GM12878 (cell line): ENCODE measurements at regions of chr20 and their contacts with region 1.

Region 1: DNA sequence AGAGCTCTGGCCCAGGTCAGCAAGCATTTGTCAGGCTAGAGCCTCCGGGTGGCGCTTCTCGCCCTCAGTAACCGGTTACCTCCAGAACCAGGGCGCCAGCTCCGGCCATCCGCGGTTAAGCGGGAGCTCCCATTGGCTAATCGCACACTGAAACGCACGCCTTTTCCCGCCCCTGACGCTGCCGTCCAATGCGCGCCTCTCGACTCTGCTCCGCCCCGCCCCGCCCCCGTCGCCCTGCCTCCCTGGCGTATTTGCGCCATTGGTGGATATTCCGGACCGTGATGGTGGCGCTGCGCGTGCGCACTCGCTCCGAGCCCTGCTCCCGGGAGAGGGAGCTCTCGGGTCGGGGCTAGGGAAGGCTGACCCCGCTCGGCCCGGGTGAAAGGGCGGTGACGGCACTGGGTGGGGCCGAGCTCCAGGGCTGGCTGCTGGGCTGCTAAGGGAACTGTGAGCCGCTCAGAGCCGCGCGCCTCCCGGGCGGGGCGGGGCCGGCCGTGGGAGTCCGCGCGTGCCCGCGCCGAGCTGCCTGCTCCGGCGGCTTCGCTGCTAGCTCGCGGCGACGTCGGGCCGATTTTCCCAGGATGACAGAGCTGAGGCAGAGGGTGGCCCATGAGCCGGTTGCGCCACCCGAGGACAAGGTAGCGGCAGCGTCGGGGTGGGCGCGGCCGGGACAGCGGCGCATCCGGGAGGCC is at the start of gene CDS2:
- DNase-seq: peak; percentile 98
- ATAC-seq: peak; percentile 93
- H3K4me3 ChIP-seq: peak within 1 kb of the TSS; percentile 88
- H3K27ac ChIP-seq: peak within 1 kb of the TSS; percentile 87
- H3K4me1 ChIP-seq: peaks cover 16% of the 10 kb centered on the region
- H3K27me3 ChIP-seq: no peaks in the 10 kb centered on the region
- CTCF ChIP-seq: peak; percentile 61 to 80 (median 62); a peak in 5 of 6 replicates
- EP300 ChIP-seq: no peak
- POLR2A ChIP-seq: peak; percentile 69
- RAD21 ChIP-seq: peak; percentile 80
- polyA plus RNA-seq, gene CDS2: 11.5 to 15.4 TPM

Region 2: GRCh38 chr20:5056801-5057599 is 69.7 kb before region 1 on chr20:
- CTCF ChIA-PET with region 1: no interaction called
- POLR2A ChIA-PET with region 1: no interaction called
- RAD21 ChIA-PET with region 1: interaction called, 12 read pairs
- SMC1A ChIA-PET with region 1: interaction called, 3 read pairs
- in situ Hi-C with region 1: no loop called
- intact Hi-C with region 1: no loop called
- DNase-seq: peak; percentile 38
- ATAC-seq: peak; percentile 97
- H3K4me3 ChIP-seq: no peak overlapping the region
- H3K27ac ChIP-seq: no peak overlapping the region
- H3K4me1 ChIP-seq: peaks cover 4% of the 10 kb centered on the region; the same call in 1 of the 2 replicates
- H3K27me3 ChIP-seq: peaks cover 0 to 8% of the 10 kb centered on the region in 2 experiments; a peak in 1 of 4 replicates
- CTCF ChIP-seq: peak; percentile 43 to 56 (median 53)
- EP300 ChIP-seq: no peak
- POLR2A ChIP-seq: no peak
- RAD21 ChIP-seq: peak; percentile 48

Region 3: GRCh38 chr20:5146871-5147592 is 20.4 kb after region 1 on chr20:
- CTCF ChIA-PET with region 1: interaction called, 6 read pairs
- POLR2A ChIA-PET with region 1: interaction called, 3 read pairs
- RAD21 ChIA-PET with region 1: interaction called, 22 read pairs
- SMC1A ChIA-PET with region 1: interaction called, 10 read pairs
- in situ Hi-C with region 1: no loop called
- intact Hi-C with region 1: no loop called
- DNase-seq: no peak
- ATAC-seq: peak; percentile 41
- H3K4me3 ChIP-seq: no peak overlapping the region
- H3K27ac ChIP-seq: peak overlapping the region; percentile 35; the same call in 1 of the 2 replicates
- H3K4me1 ChIP-seq: peaks cover 27% of the 10 kb centered on the region
- H3K27me3 ChIP-seq: no peaks in the 10 kb centered on the region
- CTCF ChIP-seq: no peak
- EP300 ChIP-seq: no peak
- POLR2A ChIP-seq: no peak
- RAD21 ChIP-seq: no peak

Region 4: GRCh38 chr20:5168651-5169396 is 42.2 kb after region 1 on chr20:
- CTCF ChIA-PET with region 1: interaction called, 56 read pairs
- POLR2A ChIA-PET with region 1: interaction called, 10 read pairs
- RAD21 ChIA-PET with region 1: interaction called, 54 read pairs
- SMC1A ChIA-PET with region 1: interaction called, 64 read pairs
- in situ Hi-C with region 1: no loop called
- intact Hi-C with region 1: loop called (anchors 2 kb)
- DNase-seq: no peak
- ATAC-seq: peak; percentile 7
- H3K4me3 ChIP-seq: no peak overlapping the region
- H3K27ac ChIP-seq: peak overlapping the region; percentile 27
- H3K4me1 ChIP-seq: peaks cover 56% of the 10 kb centered on the region
- H3K27me3 ChIP-seq: no peaks in the 10 kb centered on the region
- CTCF ChIP-seq: no peak
- EP300 ChIP-seq: no peak
- POLR2A ChIP-seq: no peak
- RAD21 ChIP-seq: no peak

Region 5: DNA sequence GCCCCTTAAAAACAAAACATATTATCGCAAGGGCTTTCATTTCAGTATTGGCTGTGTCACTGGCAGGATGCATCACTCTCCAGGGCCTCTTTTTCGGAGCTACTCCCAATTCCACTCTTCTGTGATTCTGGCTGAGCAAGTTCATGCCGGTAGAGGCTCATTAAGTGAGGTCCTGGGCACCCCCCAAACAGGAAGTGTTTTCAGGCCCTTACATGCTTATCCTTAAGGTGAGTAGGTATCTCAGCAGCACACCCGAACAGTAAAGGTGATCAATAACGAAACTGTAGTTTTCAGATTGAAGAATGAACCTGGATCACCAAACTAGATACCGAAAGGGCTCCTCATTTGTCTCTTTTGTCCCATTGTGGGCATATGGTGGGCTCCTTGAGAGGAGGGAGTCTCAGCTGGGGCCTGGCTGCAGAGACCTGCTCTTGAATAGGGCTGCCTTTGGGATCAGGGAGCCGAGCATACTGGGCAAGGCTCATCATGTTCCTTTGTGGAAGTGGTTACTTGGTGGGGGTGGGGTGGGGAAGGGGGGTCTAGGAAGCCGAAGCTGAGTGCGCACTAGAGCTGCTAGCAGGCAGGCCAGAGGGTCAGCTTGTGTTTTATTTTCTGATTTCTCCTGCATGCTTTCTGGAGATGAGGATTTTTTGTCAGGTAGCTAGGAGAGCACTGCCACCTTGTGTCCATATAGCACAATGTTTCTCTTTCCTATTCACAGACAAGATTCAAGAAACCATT is 65.3 kb after region 1 on chr20:
- CTCF ChIA-PET with region 1: interaction called, 386 read pairs
- POLR2A ChIA-PET with region 1: interaction called, 30 read pairs
- RAD21 ChIA-PET with region 1: interaction called, 345 read pairs
- SMC1A ChIA-PET with region 1: interaction called, 229 read pairs
- in situ Hi-C with region 1: loop called (anchors 5 kb)
- intact Hi-C with region 1: loop called (anchors 1 kb)
- DNase-seq: peak; percentile 61
- ATAC-seq: peak; percentile 79
- H3K4me3 ChIP-seq: peak overlapping the region; percentile 8; the same call in 1 of the 2 replicates
- H3K27ac ChIP-seq: peak overlapping the region; percentile 16
- H3K4me1 ChIP-seq: peaks cover 34% of the 10 kb centered on the region
- H3K27me3 ChIP-seq: no peaks in the 10 kb centered on the region
- CTCF ChIP-seq: peak; percentile 67 to 82 (median 80)
- EP300 ChIP-seq: no peak
- POLR2A ChIP-seq: no peak
- RAD21 ChIP-seq: peak; percentile 93

Region 6: DNA sequence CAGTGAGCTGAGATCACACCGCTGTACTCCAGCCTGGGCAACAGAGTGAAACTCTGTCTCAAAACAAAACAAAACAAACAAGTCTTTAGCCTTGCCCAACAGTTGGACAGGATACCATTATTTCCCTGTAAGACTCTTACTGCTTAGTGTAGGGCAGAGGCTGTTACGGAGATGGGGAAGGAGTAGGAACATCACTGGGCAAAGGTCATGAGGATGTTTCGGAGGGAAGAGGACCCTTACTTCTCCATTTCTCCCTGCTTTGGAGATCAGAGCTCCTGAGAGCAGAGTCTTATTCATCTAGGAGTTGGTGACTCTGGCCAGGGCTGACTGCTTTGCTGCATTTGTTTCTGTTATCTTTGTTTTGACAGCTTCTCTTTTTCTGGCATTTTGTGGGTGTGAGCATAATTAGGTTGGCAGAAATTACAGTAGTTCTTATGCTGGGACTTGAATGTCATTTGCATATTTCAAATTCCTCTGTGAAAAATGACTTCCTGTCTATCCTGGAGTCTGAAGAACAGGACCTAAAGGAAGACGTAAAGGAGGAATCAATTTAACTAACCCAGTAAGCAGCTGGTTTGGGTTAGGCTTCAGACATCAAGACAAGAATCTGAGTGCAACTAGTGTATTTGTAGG is 89.1 kb after region 1 on chr20:
- CTCF ChIA-PET with region 1: interaction called, 88 read pairs
- POLR2A ChIA-PET with region 1: no interaction called
- RAD21 ChIA-PET with region 1: interaction called, 70 read pairs
- SMC1A ChIA-PET with region 1: interaction called, 10 read pairs
- in situ Hi-C with region 1: no loop called
- intact Hi-C with region 1: no loop called
- DNase-seq: no peak
- ATAC-seq: no peak
- H3K4me3 ChIP-seq: no peak overlapping the region
- H3K27ac ChIP-seq: no peak overlapping the region
- H3K4me1 ChIP-seq: no peaks in the 10 kb centered on the region
- H3K27me3 ChIP-seq: no peaks in the 10 kb centered on the region
- CTCF ChIP-seq: no peak
- EP300 ChIP-seq: no peak
- POLR2A ChIP-seq: no peak
- RAD21 ChIP-seq: no peak

Region 7: GRCh38 chr20:5448449-5449118 is 321.9 kb after region 1 on chr20:
- CTCF ChIA-PET with region 1: interaction called, 40 read pairs
- POLR2A ChIA-PET with region 1: no interaction called
- RAD21 ChIA-PET with region 1: interaction called, 28 read pairs
- SMC1A ChIA-PET with region 1: interaction called, 10 read pairs
- in situ Hi-C with region 1: no loop called
- intact Hi-C with region 1: loop called (anchors 2 kb)
- DNase-seq: no peak
- ATAC-seq: peak; percentile 75
- H3K4me3 ChIP-seq: no peak overlapping the region
- H3K27ac ChIP-seq: no peak overlapping the region
- H3K4me1 ChIP-seq: no peaks in the 10 kb centered on the region
- H3K27me3 ChIP-seq: no peaks in the 10 kb centered on the region
- CTCF ChIP-seq: peak; percentile 65 to 72 (median 67)
- EP300 ChIP-seq: no peak
- POLR2A ChIP-seq: no peak
- RAD21 ChIP-seq: peak; percentile 60